Sigmoid colon (tissue), 7 donors: ENCODE measurements at regions of chr4 and their contacts with region 1.

Region 1: DNA sequence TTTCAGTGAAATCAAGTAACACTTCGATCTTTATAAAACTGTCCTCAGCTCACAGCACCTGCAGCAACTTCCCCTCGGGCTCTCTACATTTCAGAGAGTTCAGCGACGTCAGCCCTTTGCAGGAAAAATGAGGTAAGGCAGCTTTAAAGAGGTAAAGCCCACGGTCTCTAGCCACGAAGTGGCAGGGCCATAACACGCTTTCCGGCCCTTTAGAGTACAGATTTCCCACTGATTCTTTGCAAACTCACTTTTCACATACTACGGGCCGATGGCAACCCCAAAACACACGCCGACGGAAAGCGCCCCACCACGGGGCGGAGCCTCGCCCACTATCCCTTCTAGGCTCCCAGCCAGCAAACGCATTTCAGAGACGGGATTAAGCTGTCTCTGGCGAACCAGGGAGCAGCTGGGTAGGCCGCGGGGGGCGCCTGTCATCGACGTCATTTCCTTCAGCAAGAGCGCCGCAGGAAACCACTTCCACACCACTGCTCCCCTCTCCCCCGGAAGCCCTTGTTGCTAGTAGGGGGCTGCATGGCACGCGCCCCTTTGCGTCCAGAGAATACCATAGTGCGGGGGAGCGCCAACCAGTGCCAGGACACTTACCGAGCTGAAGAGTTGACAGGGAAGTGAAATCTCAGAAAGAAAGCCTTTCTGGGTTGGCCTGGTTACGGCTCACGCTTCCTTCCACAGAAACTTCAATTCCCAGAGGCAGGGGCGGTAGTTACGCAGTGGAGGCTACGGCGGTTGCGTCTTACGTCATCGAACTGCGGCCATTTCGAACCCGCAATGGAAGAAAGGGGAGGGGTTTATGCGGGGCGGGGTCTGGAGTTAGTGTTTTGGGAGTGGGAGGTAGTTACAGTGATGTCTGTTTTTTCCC is at the start of gene TRMT10A:
- DNase-seq: peak; percentile 99
- H3K4me3 ChIP-seq: peak within 1 kb of the TSS; percentile 56 to 65 (median 64)
- H3K27ac ChIP-seq: peak within 1 kb of the TSS; percentile 89 to 96 (median 92)
- H3K4me1 ChIP-seq: peaks cover 0 to 33% (median 21%) of the 10 kb centered on the region in 4 donors
- H3K27me3 ChIP-seq: no peaks in the 10 kb centered on the region
- CTCF ChIP-seq: peak in 1 of 4 experiments; percentile 14
- EP300 ChIP-seq: peak in 2 of 4 donors; percentile 2 to 7
- POLR2A ChIP-seq: peak; percentile 69 to 78
- total RNA-seq, gene TRMT10A: 3.9 to 7.5 (median 6.4) TPM

Region 2: GRCh38 chr4:98658287-98659105 is 905.1 kb before region 1 on chr4 and contains the start of gene TSPAN5:
- intact Hi-C with region 1: loop called (anchors 5 kb)
- DNase-seq: peak; percentile 84
- H3K4me3 ChIP-seq: peak within 1 kb of the TSS; percentile 59 to 83 (median 70)
- H3K27ac ChIP-seq: peak within 1 kb of the TSS; percentile 78 to 84 (median 80)
- H3K4me1 ChIP-seq: peaks cover 0 to 59% (median 34%) of the 10 kb centered on the region in 4 donors
- H3K27me3 ChIP-seq: no peaks in the 10 kb centered on the region
- CTCF ChIP-seq: no peak
- EP300 ChIP-seq: no peak
- POLR2A ChIP-seq: peak in 1 of 2 donors; percentile 27
- total RNA-seq, gene TSPAN5: 11.2 to 18.6 (median 13.5) TPM

Region 3: GRCh38 chr4:99808260-99808857 is 244.8 kb after region 1 on chr4:
- intact Hi-C with region 1: loop called (anchors 5 kb)
- DNase-seq: no peak
- H3K4me3 ChIP-seq: no peak overlapping the region
- H3K27ac ChIP-seq: no peak overlapping the region
- H3K4me1 ChIP-seq: peaks cover 0 to 12% (median 3%) of the 10 kb centered on the region in 4 donors
- H3K27me3 ChIP-seq: no peaks in the 10 kb centered on the region
- CTCF ChIP-seq: peak in 3 of 4 experiments; percentile 14 to 26 (median 22)
- EP300 ChIP-seq: no peak
- POLR2A ChIP-seq: no peak

Region 4: GRCh38 chr4:99832336-99832735 is 268.8 kb after region 1 on chr4:
- intact Hi-C with region 1: no loop called
- DNase-seq: no peak
- H3K4me3 ChIP-seq: no peak overlapping the region
- H3K27ac ChIP-seq: peak overlapping the region in 3 of 4 donors; percentile 24 to 55 (median 32)
- H3K4me1 ChIP-seq: peaks cover 0 to 26% (median 18%) of the 10 kb centered on the region in 4 donors
- H3K27me3 ChIP-seq: no peaks in the 10 kb centered on the region
- CTCF ChIP-seq: no peak
- EP300 ChIP-seq: no peak
- POLR2A ChIP-seq: no peak

Region 5: GRCh38 chr4:99885063-99885664 is 321.6 kb after region 1 on chr4:
- intact Hi-C with region 1: loop called (anchors 2 kb)
- DNase-seq: no peak
- H3K4me3 ChIP-seq: no peak overlapping the region
- H3K27ac ChIP-seq: peak overlapping the region in 3 of 4 donors; percentile 39 to 72 (median 69)
- H3K4me1 ChIP-seq: peaks cover 0 to 54% (median 30%) of the 10 kb centered on the region in 4 donors
- H3K27me3 ChIP-seq: no peaks in the 10 kb centered on the region
- CTCF ChIP-seq: peak; percentile 37 to 63 (median 46)
- EP300 ChIP-seq: no peak
- POLR2A ChIP-seq: no peak

Region 6: GRCh38 chr4:100095729-100096595 is 532.4 kb after region 1 on chr4:
- intact Hi-C with region 1: no loop called
- DNase-seq: peak; percentile 84
- H3K4me3 ChIP-seq: no peak overlapping the region
- H3K27ac ChIP-seq: no peak overlapping the region
- H3K4me1 ChIP-seq: peaks cover 0 to 11% (median 8%) of the 10 kb centered on the region in 4 donors
- H3K27me3 ChIP-seq: no peaks in the 10 kb centered on the region
- CTCF ChIP-seq: peak in 3 of 4 experiments; percentile 28 to 56 (median 43)
- EP300 ChIP-seq: no peak
- POLR2A ChIP-seq: no peak

Region 7: DNA sequence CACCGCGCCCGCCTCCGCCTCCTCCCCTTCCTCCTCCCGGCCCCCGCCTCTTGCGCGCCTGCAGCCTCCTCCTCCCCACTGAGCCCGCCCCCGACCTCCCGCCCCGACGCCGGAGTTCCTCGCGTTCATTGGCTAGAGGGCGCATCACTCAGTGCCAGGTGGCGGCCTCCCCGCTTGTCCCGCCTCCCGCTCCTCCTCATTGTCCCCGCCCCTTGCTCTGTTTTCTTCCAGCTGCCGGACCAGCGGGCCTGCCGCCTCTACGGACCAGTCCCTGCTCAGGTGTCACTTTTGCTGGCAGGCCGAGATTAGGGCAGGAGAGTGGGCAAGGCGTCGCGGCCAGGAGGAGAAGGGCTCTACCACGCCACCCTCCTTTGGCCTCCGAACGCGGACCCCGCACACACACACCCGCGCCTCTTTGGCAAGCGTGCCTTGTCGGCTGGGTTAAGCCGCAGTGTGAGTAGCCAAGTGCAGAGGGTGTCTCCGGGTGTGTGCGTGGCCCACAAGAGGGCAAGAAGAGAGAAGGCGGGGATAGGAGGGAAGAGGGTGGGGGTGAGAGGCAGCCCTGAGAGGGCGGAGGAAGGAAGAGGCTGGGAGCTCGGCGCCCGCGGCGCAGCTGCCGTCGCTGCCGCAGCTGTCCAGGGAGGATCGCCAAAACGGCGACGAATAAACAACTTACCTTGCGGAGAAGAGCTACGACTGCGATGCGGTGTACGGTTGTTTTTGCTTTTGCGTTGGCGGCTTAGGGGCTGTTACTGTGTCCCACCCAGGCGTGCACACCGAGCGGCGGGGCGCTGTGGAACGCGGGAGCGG is 1784.2 kb after region 1 on chr4:
- intact Hi-C with region 1: loop called (anchors 10 kb)
- DNase-seq: peak; percentile 100
- H3K4me3 ChIP-seq: peak overlapping the region; percentile 86 to 95 (median 92)
- H3K27ac ChIP-seq: peak overlapping the region; percentile 92 to 97 (median 96)
- H3K4me1 ChIP-seq: peaks cover 0 to 39% (median 24%) of the 10 kb centered on the region in 4 donors
- H3K27me3 ChIP-seq: no peaks in the 10 kb centered on the region
- CTCF ChIP-seq: peak in 3 of 4 experiments; percentile 10 to 16 (median 14)
- EP300 ChIP-seq: no peak
- POLR2A ChIP-seq: peak; percentile 42 to 71